ENCODE measurements at regions of chr10 and their contacts with region 1.

Region 1: GRCh38 chr10:75408911-75409885 is 7.6 kb upstream of the ZNF503 start:
- DNase-seq: peak; percentile 79 to 88 (median 82)
- ATAC-seq: peak; percentile 74 to 95 (median 88)
- H3K4me3 ChIP-seq: peak overlapping the region; percentile 75 to 98 (median 86)
- H3K27ac ChIP-seq: peak overlapping the region; percentile 81 to 98 (median 92)
- H3K4me1 ChIP-seq: peaks cover 0 to 40% (median 24%) of the 10 kb centered on the region in 12 donors
- H3K27me3 ChIP-seq: peaks cover 0 to 27% (median 0%) of the 10 kb centered on the region in 9 donors
- CTCF ChIP-seq: no peak
- POLR2A ChIP-seq: no peak

Region 2: GRCh38 chr10:75431180-75432111 is 22.2 kb after region 1 on chr10 and contains the start of gene LRMDA:
- intact Hi-C with region 1: loop called in 4 of 10 experiments (anchors 2 kb)
- DNase-seq: peak; percentile 46 to 81 (median 63)
- ATAC-seq: peak in 3 of 4 donors; percentile 58 to 82 (median 78)
- H3K4me3 ChIP-seq: peak within 1 kb of the TSS; percentile 54 to 84 (median 70)
- H3K27ac ChIP-seq: peak within 1 kb of the TSS; percentile 49 to 92 (median 78)
- H3K4me1 ChIP-seq: peaks cover 0 to 59% (median 35%) of the 10 kb centered on the region in 12 donors
- H3K27me3 ChIP-seq: no peaks in the 10 kb centered on the region
- CTCF ChIP-seq: no peak
- POLR2A ChIP-seq: no peak
- total RNA-seq, gene LRMDA: 7.7 to 34.4 (median 14.9) TPM

Region 3: GRCh38 chr10:75547391-75548298 is 138.4 kb after region 1 on chr10:
- intact Hi-C with region 1: loop called in 4 of 10 experiments (anchors 5 to 10 kb)
- DNase-seq: no peak
- ATAC-seq: no peak
- H3K4me3 ChIP-seq: no peak overlapping the region
- H3K27ac ChIP-seq: peak overlapping the region in 5 of 12 donors; percentile 18 to 35 (median 19)
- H3K4me1 ChIP-seq: peaks cover 0 to 40% (median 15%) of the 10 kb centered on the region in 12 donors
- H3K27me3 ChIP-seq: no peaks in the 10 kb centered on the region
- CTCF ChIP-seq: no peak
- POLR2A ChIP-seq: no peak

Region 4: DNA sequence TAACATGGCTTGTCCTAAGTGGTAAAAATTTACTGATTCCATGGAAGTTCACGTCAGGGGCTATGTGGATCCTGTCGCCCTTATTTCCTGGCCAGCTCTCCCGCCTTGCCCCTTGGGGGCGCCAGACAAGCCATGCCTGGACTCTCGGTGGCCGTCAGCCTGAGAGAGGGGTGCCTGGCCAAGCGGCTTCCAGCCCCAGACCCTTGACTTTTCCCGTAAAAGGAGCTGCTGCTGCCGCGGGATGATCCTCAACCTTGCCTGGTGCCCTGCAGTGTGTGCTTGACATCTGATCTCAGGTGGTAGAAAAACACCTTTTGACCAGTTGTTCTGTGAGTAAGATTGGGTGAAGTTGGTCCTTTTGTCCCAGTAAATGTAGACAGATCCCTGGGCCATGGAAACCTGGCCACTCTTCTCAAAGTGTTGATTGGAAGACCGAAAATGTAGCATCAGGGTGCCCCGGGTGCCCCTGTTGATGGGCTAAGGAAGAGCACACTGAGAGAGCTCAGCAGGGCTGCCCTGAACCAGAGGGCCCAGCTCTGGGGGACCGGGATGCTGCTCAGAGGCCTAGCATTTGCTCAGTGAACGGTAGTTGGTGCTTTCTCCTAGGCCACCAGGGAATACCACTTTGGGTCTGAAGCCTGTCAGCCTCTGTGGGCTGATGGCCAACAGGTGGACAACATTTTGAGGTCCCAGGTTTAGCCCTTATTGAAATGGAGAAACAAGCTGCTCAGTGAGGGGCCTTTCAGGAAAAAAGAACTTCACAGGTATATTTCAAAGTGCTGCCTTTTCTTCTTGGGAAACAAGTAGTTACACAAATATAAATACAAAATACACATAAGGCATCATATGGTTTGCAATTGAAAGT is 184.7 kb after region 1 on chr10:
- intact Hi-C with region 1: loop called in 3 of 10 experiments (anchors 5 to 10 kb)
- DNase-seq: no peak
- ATAC-seq: no peak
- H3K4me3 ChIP-seq: no peak overlapping the region
- H3K27ac ChIP-seq: no peak overlapping the region
- H3K4me1 ChIP-seq: peaks cover 0 to 9% (median 2%) of the 10 kb centered on the region in 12 donors
- H3K27me3 ChIP-seq: no peaks in the 10 kb centered on the region
- CTCF ChIP-seq: peak in 2 of 12 donors; percentile 19 to 23
- POLR2A ChIP-seq: no peak

Measured in heart left ventricle (tissue), 16 donors.